Dendritic cell treated with granulocyte-macrophage colony-stimulating factor and Interleukin-4, amounts not matched to agents 40 ng/mL and 50 ng/mL, for 4 days (primary cell): ENCODE measurements at regions of chr2 and their contacts with region 1.

Region 1: DNA sequence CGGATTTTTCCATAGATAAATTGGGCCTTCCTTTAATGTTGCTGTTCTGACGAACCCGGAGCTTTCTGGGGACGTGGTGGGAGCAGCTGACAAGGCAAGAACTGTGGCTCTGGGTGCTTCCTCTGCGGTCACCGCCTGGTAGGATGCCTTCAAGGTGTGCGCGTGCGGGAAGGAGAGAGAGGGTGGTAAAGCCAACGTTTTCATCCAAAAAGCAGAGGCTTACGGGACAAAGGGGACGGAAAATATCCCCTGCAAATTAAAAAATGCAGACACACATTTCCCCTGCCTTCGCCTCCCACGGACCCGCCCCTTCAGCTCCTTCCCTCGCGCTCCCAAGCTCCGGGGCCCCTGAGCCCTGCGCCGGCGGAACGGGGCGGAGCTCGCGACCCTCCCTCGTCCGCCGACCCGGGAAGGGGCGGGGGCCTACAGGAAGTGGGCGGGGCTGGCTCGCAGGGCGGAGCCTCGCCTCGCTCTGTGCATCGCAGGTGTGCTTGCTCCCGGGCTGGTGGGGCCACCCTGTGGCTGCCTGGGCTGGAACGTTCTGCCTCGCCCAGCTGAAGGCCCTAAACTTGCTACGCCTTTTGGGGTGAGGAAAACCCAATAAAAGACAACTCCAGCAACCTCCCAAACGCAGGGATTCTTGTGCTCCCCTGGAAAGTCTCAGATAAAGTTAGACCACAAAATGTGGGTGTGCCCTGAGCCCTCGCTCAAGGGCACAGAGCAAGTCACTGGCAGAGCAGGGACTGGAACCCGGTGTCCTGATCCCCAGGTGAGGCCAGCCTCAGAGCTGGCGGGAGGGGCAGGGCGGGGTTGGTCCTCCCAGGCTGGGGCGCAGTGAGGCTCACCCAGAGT is 25.4 kb upstream of the SLC66A3 start:
- H3K4me3 Mint-ChIP-seq: peak overlapping the region; percentile 47
- H3K27ac Mint-ChIP-seq: no peak overlapping the region
- H3K4me1 Mint-ChIP-seq: peaks cover 17% of the 10 kb centered on the region
- H3K27me3 Mint-ChIP-seq: peaks cover 59% of the 10 kb centered on the region

Region 2: DNA sequence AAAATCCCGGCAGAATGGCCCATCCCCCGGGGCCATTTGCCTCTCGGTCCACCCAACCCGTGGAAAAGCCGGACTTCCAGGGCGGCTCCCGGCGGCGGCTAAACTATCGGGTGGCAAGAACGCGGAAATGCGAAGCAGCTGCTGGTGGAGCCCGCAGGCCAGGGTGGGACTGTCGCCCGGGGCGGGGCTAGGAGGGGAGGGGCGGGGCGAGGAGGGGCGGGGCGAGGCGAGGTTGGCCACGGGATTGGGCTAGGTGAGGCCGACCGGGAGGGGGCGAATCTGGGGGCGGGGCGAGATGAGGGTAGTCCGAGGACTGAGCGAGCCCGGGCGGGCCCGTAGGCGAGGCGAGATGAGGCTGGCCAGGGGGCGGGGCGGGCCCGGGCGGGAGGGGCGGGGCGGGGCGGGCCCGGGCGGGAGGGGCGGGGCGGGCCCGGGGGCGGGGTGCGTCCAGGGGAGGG is 25.1 kb after region 1 on chr2:
- intact Hi-C with region 1: loop called (anchors 2 kb)
- H3K4me3 Mint-ChIP-seq: peak overlapping the region; percentile 80
- H3K27ac Mint-ChIP-seq: peak overlapping the region; percentile 94
- H3K4me1 Mint-ChIP-seq: peaks cover 36% of the 10 kb centered on the region
- H3K27me3 Mint-ChIP-seq: no peaks in the 10 kb centered on the region

Region 3: GRCh38 chr2:11187083-11187619 is 57.3 kb after region 1 on chr2:
- intact Hi-C with region 1: loop called (anchors 10 kb)
- H3K4me3 Mint-ChIP-seq: no peak overlapping the region
- H3K27ac Mint-ChIP-seq: peak overlapping the region; percentile 52
- H3K4me1 Mint-ChIP-seq: no peaks in the 10 kb centered on the region
- H3K27me3 Mint-ChIP-seq: no peaks in the 10 kb centered on the region

Region 4: DNA sequence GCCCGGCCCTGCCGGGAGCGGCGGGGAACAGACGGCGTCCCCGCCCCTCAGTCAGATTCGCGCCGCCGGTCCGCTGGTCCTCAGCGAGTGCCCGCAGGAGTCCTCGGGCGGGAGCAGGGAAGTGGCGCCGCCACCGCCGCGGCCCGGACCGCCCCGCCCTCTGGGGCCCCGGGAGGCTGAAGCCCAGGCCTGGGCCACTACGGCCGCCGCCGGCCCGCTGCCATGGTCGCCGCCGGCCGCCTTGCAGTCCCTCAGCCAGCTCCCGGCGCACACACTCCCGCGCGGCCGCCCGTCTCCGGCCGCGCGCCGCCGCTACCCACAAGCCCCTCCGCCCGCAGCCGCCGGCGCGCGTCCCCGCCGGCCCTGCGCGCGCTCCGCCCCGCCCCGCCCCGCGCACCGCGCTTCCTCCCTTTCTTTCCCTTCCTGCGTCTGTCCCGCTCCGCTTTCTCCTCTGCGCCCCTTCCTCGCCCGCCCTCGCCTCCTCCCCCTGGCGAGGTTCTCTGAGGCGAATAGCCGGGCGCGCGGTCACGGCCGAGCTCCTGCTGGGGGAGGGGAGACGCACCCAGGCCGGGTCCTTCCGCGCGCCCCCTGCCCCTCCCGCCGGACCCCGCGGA is 214.6 kb after region 1 on chr2 and contains the start of gene ROCK2:
- intact Hi-C with region 1: loop called (anchors 10 kb)
- H3K4me3 Mint-ChIP-seq: peak within 1 kb of the TSS; percentile 87
- H3K27ac Mint-ChIP-seq: peak within 1 kb of the TSS; percentile 92
- H3K4me1 Mint-ChIP-seq: peaks cover 22% of the 10 kb centered on the region
- H3K27me3 Mint-ChIP-seq: no peaks in the 10 kb centered on the region

Region 5: DNA sequence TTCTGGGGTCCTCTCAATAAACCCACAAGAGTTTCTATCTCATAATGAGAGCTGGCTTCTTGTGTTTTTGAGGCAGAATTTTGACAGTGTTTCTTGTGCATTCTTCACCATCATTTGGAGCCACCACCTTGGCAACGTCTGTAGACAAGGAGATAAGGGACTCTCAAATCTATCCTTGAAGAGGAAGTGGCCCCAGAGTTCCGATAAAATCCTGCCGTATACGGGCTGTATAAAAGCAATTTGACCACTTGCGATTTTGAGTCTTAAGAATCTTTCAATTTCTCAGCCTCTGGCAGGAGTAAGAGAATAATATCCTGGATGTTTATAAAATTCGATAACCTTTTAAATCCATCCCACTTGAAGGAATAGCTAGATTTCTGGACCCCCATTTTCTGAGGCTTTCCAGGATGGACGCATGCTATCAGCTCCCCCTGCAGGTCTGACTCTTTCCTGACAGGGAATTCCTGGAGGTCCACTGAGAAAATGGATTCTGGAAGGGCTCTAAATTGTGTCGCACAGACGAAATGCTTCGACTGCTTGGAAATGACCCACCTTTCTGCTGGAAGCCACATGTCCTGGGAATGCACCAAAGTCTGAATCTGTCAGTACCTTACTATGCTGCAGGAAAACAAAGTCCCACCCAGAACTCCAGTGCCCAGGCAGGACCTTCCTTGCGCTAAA is 282.1 kb after region 1 on chr2:
- intact Hi-C with region 1: loop called (anchors 5 kb)
- H3K4me3 Mint-ChIP-seq: peak overlapping the region; percentile 39
- H3K27ac Mint-ChIP-seq: no peak overlapping the region
- H3K4me1 Mint-ChIP-seq: no peaks in the 10 kb centered on the region
- H3K27me3 Mint-ChIP-seq: peaks cover 13% of the 10 kb centered on the region

Region 6: DNA sequence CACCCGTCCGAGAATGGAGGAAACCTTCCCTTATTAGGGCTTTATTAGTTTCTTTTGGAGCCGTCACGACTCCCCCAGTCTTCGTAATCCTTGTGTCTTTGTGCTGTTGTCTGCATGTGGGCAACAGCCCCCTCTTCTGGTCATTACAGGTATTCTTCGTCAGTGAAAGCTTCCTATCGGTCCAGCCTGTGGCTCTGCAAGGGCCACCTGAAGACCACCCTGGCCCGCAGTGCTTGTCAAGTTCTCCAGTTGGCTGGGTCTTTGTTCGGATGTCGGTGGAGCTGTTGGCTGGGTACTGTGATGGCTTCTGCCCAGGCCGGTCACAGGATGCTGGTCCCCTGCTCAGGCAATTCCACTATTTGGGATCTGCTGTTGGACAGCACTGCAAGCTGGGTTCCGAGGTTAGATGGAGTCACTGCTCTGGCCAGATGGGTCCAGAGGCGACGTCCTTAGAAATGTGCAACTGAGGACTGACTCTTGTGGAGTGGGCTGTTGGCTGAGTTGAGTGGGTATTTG is 317.0 kb after region 1 on chr2:
- intact Hi-C with region 1: loop called (anchors 1 kb)
- H3K4me3 Mint-ChIP-seq: no peak overlapping the region
- H3K27ac Mint-ChIP-seq: no peak overlapping the region
- H3K4me1 Mint-ChIP-seq: no peaks in the 10 kb centered on the region
- H3K27me3 Mint-ChIP-seq: no peaks in the 10 kb centered on the region

Region 7: DNA sequence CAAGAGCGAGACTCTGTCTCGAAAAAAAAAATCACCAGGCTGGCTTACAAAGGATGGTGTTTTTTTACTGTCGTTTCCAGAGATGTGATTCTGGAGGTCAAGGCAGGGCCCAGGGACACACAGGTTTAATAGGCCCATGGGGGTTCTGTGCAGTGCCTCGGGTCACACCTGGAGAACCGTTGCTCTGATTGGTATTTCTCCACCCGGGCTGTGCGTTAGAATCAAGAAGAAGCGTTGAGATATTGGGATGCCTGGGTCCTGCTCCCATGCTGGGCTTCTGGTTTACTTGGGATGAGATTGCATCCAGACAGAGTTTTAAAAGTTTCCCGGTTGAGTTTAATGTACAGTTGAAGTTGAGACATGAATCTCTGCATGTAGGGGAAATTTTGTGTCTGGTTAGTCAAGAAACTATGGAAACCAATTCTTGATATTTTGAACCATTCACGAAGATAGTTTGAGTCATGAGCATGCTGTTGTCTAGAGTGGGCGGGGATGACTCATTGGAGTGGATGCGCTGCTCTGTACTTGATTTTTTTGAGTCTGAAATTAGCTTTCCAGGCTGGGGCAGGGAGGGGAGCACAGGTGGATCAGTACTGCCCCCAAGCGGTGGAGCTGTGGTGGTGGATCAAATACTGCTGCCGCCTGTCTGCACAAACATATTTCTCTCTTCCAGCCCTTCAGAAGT is 454.2 kb after region 1 on chr2:
- intact Hi-C with region 1: loop called (anchors 5 kb)
- H3K4me3 Mint-ChIP-seq: no peak overlapping the region
- H3K27ac Mint-ChIP-seq: no peak overlapping the region
- H3K4me1 Mint-ChIP-seq: peaks cover 7% of the 10 kb centered on the region
- H3K27me3 Mint-ChIP-seq: peaks cover 15% of the 10 kb centered on the region